Breast epithelium (tissue), 4 donors: ENCODE measurements at regions of chr17 and their contacts with region 1.

Region 1: DNA sequence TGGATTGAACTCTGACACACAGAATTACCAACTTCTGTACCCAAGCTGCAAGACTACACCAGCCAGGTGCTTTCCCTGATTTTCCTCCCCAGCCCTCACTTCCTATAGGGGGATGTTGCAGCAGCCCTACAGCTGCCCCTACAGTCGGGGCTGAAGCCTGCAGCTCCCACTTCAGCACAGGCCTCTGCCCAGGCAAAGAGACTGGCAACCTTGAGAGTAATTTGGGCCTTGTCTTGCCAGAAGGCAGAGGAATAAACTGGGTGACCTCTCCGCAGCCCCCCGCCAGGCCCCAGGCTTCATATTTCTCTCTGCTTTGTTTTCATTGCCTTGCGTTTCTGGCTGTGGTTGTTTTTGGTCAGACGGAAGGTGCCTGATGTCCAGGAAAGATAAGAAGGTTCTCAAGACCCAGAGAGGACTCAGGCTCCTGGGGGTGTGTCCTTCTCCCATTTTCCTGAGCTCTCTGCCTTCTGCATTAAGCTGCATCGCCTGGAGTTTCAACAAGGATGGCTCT is 32.0 kb downstream of the SLC6A4 start:
- DNase-seq: peak in 1 of 2 donors; percentile 8
- H3K4me3 ChIP-seq: no peak overlapping the region
- H3K27ac ChIP-seq: no peak overlapping the region
- H3K4me1 ChIP-seq: no peaks in the 10 kb centered on the region
- H3K27me3 ChIP-seq: peaks cover 0 to 6% of the 10 kb centered on the region in 2 donors
- CTCF ChIP-seq: no peak
- POLR2A ChIP-seq: no peak

Region 2: DNA sequence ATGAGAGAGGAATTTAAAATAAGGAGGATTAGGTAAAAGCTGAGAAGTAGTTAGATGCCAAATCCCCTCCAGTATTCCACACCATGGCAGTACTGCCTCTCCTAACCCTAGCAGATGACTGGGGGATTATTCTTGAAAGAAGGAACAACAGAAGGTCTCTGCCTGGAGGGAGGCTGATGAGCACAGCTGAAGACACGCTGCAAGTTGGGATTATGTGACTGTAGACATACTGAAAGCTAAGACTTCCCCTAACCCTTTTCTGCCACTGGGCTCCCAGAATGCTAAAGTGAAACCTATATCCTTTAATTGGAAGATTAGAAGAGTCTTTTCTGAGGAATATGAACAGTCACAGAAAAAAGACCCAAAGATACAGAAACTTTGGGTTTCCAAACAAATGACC is 1769.8 kb before region 1 on chr17:
- intact Hi-C with region 1: loop called (anchors 10 kb)
- DNase-seq: no peak
- H3K4me3 ChIP-seq: no peak overlapping the region
- H3K27ac ChIP-seq: no peak overlapping the region
- H3K4me1 ChIP-seq: no peaks in the 10 kb centered on the region
- H3K27me3 ChIP-seq: no peaks in the 10 kb centered on the region
- CTCF ChIP-seq: no peak
- POLR2A ChIP-seq: no peak

Region 3: DNA sequence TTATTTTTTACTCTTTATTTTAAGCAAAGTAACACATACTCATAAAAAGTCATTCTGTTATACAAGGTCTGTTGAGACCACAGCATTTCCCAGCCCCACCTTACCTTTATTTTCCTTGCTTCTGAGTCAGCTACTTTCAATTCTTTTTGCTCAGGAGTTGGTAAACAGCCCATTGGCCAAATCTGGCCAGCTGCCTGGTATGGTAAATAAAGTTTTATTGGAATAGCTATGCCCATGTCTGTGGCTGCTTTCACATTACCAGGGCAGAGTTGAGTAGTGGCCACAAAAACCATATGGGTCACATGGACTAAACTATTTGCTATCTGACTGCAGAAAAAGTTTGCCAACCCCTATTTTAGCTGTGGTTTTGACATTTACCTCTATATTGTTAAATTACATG is 90.3 kb before region 1 on chr17:
- intact Hi-C with region 1: no loop called
- DNase-seq: no peak
- H3K4me3 ChIP-seq: no peak overlapping the region
- H3K27ac ChIP-seq: no peak overlapping the region
- H3K4me1 ChIP-seq: peaks cover 0 to 6% of the 10 kb centered on the region in 2 donors
- H3K27me3 ChIP-seq: no peaks in the 10 kb centered on the region
- CTCF ChIP-seq: no peak
- POLR2A ChIP-seq: no peak